ENCODE measurements at regions of chr17 and their contacts with region 1.

Region 1: DNA sequence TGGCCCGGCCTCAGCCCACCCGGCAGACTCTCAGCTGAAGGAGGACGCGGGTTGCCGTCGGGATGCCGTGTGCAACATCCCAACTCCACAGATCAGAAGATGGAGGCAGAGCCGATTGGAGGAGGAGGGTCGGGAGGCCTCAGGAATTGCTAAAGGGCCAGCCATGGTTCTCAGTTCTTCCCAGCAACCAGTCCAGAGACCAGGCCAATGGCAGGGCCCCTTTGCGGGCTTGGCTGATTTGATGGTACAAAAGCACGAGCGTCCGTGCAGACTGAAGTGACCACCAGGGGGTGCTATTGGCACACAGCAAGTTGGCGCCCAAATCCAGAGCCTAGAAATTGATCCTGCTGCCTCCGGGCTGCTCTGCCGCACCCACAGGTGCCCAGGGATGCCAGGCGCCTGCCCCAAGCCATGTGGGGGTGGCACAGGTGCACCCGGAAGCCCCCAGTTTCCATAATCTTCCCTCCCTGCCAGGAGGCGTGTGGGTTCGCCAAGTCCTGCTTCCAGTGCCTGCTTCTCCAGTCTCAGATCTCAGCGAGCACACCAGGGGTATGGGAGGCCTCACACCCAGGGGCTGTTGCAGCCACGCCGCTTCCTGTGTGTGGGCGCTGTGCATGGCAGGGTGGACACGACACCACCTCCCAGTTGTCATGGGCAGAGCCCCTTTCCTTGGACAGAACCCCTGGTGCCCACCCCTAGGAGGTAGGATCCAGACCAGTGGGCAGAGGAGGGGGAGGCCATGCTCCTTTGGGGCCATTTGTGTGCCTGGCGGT is 7.1 kb upstream of the TEX19 start:
- DNase-seq: peak; percentile 90

Region 2: DNA sequence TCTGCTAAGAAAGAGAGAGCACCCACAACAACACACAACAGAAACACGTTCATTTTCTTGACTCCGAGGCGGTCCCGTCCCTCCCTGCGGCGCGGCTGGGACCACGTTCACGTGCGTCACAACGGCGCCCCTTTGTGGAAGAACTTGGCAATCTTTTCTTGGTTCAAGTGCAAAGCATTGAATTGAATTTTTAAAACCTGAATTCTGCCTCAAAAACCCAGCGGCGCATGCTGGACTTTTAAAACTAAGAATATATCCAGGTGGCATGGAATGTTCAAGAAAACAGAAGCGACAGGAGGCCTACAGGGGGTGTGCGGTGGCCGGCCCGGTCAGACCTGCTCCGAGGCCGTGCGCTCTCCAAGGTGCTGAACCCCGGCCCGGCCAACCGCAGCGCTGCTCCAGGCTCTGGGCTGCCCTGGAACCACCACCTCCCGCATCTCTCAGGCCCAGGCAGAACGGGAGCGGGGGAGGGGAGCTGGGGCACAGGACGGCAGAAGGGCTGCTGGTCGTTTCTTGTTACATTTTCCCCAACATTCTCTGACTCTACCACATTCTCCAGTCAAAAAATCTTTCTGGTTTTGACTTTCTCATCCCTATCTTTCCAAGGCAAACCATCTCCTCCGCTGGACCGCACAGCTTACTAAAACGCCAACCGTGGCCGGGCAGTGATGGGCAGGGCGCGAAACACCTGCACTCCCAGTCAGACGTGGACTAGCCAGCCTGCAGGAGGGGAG is 62.8 kb after region 1 on chr17:
- intact Hi-C with region 1: loop called (anchors 1 kb)
- DNase-seq: peak; percentile 85

Region 3: GRCh38 chr17:82551779-82552457 is 200.0 kb after region 1 on chr17:
- intact Hi-C with region 1: loop called (anchors 2 kb)
- DNase-seq: peak; percentile 89

Region 4: GRCh38 chr17:82775001-82775823 is 423.3 kb after region 1 on chr17:
- intact Hi-C with region 1: loop called (anchors 5 kb)
- DNase-seq: peak; percentile 86

Measured in cardiac septum (tissue), 1 donor.